SK-N-SH (cell line): ENCODE measurements at regions of chr1 and their contacts with region 1.

Region 1: DNA sequence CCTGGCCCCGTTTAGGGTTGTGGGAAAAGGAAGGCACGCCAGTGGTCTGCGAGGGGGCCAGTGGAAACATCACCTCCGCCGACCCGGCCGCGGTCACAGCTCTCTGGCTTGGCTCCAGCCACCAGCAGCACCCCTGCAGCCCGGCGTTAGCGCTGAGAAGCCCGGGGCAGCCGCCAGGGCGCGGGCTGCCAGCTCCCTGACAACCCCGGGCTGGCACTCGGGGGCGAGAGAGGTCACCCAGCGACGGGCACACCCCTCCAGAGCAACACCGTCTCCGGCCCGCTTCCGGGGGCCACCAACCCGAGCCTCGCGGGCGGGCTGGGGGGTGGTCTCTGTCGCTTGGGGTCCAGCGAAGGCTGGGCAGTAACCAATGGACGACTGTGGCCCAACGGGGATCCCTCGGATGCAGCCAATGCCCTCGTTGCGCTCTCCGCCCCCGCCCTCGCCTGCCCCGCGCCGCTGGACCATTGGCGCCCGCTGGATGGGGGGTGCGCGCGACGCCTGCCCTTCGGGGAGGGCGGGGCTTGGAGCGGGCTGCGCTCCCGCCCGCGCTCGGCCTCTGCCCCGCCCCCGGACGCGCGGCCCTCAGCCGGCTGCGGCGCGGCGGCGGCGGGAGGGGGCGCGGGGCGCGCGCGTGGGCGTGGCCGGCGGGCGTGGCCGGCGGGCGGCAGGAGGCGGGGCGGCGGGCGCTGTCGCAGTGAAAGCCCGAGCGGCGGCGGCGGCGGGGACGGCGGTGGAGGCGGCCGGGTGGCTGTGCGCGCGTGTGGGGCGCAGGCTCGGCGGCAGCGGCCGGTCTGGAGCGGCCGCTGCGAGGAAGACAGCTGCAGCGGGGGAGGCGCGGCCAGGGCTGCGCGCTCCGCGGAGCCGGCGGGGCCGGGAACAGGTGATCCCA is at the start of gene MAN1C1:
- DNase-seq: peak; percentile 99
- H3K4me3 ChIP-seq: peak within 1 kb of the TSS; percentile 70 to 73
- H3K27ac ChIP-seq: peak within 1 kb of the TSS in 1 of 2 experiments; percentile 81; a peak in 2 of 4 replicates
- H3K4me1 ChIP-seq: peaks cover 0 to 33% of the 10 kb centered on the region in 2 experiments; a peak in 2 of 4 replicates
- H3K27me3 ChIP-seq: peaks cover 41% of the 10 kb centered on the region
- CTCF ChIP-seq: peak; percentile 50
- EP300 ChIP-seq: 0 out of 4 replicates have a peak, but pooled peaks of 1 of the 2 experiments have one; percentile 7
- RAD21 ChIP-seq: no peak
- polyA plus RNA-seq, gene MAN1C1: 0.20 and 0.26 TPM in 2 replicates

Region 2: GRCh38 chr1:25580927-25581326 is 35.4 kb before region 1 on chr1:
- CTCF ChIA-PET with region 1: interaction called, 10 read pairs
- POLR2A ChIA-PET with region 1: no interaction called
- DNase-seq: no peak
- H3K4me3 ChIP-seq: no peak overlapping the region
- H3K27ac ChIP-seq: no peak overlapping the region
- H3K4me1 ChIP-seq: peaks cover 0 to 19% of the 10 kb centered on the region in 2 experiments; a peak in 1 of 4 replicates
- H3K27me3 ChIP-seq: no peaks in the 10 kb centered on the region
- CTCF ChIP-seq: no peak
- EP300 ChIP-seq: no peak
- RAD21 ChIP-seq: no peak

Region 3: DNA sequence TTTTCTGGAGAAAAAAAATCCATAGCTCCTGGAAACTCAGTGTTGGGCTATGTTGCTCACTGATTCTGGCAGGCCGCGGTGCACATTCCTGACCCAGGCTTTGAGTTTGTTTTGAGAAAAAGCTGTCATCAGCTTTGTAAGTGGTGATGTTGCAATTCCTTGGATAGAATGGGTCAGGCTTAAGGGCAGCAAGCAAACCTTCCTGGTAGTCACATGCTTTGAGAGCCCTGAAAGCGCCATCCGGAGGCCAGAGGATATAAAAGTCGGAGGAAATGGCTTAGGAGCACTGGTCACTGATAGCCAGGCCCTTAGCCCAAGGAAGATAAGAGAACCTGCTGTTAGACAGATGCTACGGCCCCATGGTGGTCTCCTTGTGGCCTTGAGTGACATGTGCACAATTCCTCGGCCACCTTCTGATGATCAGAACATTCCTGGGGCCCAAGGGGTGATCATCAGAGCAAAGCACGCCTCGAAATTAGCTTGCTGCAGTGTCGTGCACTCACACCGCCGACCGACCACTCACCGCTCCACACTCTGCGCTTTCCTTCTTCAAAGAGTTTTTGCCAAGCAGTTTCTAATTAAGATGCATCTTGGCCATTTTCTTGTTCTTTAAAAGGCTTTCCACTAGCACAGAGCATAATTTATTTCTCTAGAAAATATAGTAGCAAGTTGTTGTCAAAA is 78.9 kb after region 1 on chr1:
- CTCF ChIA-PET with region 1: interaction called, 14 read pairs
- POLR2A ChIA-PET with region 1: no interaction called
- DNase-seq: no peak
- H3K4me3 ChIP-seq: no peak overlapping the region
- H3K27ac ChIP-seq: no peak overlapping the region
- H3K4me1 ChIP-seq: peaks cover 8 to 19% of the 10 kb centered on the region in 2 experiments; a peak in 3 of 4 replicates
- H3K27me3 ChIP-seq: no peaks in the 10 kb centered on the region; the same call in 1 of the 2 replicates
- CTCF ChIP-seq: peak; percentile 32; the same call in 1 of the 2 replicates
- EP300 ChIP-seq: no peak
- RAD21 ChIP-seq: peak; percentile 32; the same call in 1 of the 2 replicates

Region 4: DNA sequence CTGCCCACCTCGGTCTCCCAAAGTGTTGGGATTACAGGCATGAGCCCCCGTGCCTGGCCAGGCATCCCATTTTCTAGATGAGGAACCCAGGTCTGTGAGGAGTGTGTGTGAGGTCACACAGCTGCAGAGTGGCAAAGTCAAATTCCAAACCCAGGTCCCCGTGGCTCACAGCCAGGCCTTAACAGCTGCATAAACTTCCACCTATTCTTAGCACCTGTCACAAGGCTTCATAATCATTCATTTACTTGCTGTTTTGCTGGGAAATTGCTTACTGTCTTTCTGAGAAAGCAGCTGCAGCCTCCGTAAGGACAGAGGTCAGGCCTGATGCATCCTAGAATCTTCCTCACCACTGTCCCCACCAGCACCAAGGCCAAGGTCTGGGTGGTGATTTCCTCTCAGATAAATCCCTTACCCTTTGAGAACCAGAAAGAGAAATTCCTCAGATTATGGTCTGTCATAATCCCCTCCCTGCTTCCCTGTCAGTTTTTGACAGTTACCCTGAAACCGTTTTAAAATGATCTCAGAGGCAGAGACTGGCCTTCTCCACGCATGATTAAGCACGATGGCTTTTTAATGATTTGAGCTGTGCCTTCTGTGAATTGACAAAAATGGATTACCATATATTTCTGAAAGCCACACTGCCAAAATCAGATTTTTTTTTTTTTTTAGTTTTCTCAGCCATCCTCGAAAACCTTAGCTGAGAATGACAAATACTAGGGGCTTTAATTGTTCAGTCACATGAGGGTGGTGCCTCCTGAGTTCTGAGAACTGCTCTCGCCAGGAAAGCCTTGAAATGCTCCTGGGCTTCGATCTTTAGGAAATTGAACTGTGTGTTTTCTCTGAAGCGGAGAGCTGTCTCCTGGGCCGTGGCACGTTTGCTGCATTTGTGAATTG is 113.7 kb after region 1 on chr1:
- CTCF ChIA-PET with region 1: interaction called, 12 read pairs
- POLR2A ChIA-PET with region 1: no interaction called
- DNase-seq: no peak
- H3K4me3 ChIP-seq: no peak overlapping the region
- H3K27ac ChIP-seq: peak overlapping the region in 1 of 2 experiments; percentile 34; a peak in 2 of 4 replicates
- H3K4me1 ChIP-seq: peaks cover 0 to 77% of the 10 kb centered on the region in 2 experiments; a peak in 2 of 4 replicates
- H3K27me3 ChIP-seq: no peaks in the 10 kb centered on the region
- CTCF ChIP-seq: no peak
- EP300 ChIP-seq: no peak
- RAD21 ChIP-seq: no peak

Region 5: DNA sequence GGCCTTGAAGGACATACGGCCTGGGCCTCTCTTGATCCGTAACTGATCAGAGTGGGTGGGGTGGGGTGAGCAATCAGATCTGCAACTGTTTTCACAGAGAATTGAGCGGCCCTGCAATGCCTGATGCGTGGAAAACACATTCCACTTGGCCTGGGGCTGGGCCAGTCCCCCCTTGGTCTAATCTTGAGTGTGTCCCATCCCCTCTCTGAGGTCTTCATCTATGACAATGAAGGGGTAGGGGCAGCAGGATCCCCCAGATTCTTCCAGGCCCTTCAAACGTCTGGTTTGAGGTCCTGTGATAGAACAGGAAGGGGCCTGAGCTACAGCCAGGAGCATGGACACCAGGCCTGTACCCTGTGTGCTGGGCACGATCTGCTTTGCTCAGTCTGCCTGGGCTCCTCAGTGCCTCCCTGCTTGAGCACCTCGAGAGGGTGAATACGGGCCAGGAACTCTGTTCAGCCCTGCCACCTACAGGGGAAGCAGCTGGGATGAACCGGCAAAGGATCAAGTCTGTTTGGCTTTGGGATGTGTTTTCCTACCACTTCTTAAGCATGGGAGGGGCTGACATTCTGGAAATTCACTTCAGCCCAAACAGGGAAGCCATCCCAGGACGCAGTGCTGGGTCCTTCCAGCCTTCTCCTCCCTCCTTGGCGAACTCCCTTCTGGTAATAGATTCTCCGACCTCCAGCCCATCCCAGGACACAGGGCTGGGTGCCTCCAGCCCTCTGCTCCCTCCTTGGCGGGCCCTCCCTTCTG is 127.7 kb after region 1 on chr1:
- CTCF ChIA-PET with region 1: interaction called, 25 read pairs
- POLR2A ChIA-PET with region 1: no interaction called
- DNase-seq: peak; percentile 69
- H3K4me3 ChIP-seq: no peak overlapping the region
- H3K27ac ChIP-seq: peak overlapping the region in 1 of 2 experiments; percentile 54; a peak in 1 of 4 replicates
- H3K4me1 ChIP-seq: peaks cover 0 to 40% of the 10 kb centered on the region in 2 experiments; a peak in 1 of 4 replicates
- H3K27me3 ChIP-seq: no peaks in the 10 kb centered on the region
- CTCF ChIP-seq: 0 out of 2 replicates have a peak, but pooled peaks have one; percentile 27
- EP300 ChIP-seq: no peak
- RAD21 ChIP-seq: peak; percentile 76

Region 6: DNA sequence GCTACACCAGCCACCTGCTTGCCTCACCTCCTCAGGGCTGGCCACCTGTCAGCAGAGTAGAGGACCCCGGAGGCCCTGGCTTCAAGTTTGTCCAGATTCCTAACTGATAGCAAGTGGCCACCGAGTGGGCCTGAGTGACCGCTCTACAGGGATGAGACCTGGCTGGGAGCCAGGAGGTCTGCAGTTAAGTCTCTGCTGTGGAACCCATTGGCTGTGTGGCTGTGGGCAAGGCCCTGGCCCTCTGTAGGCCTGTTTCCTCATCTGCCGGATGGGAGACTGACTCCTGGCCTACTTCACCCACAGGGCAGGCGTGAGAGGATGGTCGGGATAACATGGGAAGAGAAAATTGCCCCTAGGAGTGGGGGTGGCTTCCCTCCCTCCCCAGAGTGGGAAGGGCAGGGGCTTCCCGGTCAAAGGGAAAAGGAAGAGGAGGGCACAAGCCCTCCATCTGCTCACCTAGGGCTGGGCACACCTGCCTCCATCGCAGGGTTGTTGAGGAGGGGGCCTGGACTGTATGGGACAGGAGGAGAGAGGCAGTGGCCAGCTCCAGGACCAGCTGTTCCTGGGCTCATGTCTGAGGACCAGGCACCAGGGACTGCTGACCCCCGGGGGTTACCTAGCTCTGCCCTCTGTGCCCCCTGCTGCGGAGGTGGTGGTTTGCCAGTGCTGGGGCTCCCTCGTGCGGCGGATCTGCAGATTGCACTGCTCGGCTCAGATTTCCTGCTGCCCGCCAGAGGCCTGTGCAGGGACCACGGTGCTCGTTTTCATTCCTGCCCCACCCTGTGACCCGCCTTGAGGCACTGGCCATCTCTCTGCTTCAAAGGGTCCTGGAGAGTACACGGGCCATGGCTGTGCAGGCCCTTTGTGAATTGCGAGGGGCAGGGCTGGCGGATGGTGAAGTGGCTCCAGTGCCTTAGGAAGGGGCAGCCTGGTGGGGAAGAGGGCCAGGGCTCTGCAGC is 194.3 kb after region 1 on chr1:
- CTCF ChIA-PET with region 1: interaction called, 76 read pairs
- POLR2A ChIA-PET with region 1: interaction called, 4 read pairs
- DNase-seq: peak; percentile 90
- H3K4me3 ChIP-seq: no peak overlapping the region; a peak in 1 of 4 replicates
- H3K27ac ChIP-seq: peak overlapping the region in 1 of 2 experiments; percentile 24; a peak in 1 of 4 replicates
- H3K4me1 ChIP-seq: peaks cover 0 to 16% of the 10 kb centered on the region in 2 experiments; a peak in 1 of 4 replicates
- H3K27me3 ChIP-seq: no peaks in the 10 kb centered on the region
- CTCF ChIP-seq: peak; percentile 90
- EP300 ChIP-seq: no peak
- RAD21 ChIP-seq: peak; percentile 91